HCT116 (cell line): ENCODE measurements at regions of chr18 and their contacts with region 1.

Region 1: GRCh38 chr18:37476182-37476581 is 89.4 kb downstream of the CELF4 start:
- DNase-seq: peak; percentile 31
- ATAC-seq: peak; percentile 93
- H3K4me3 ChIP-seq: no peak overlapping the region
- H3K27ac ChIP-seq: no peak overlapping the region
- H3K4me1 ChIP-seq: peaks cover 0 to 2% of the 10 kb centered on the region in 2 experiments; a peak in 2 of 4 replicates
- H3K27me3 ChIP-seq: peaks cover 26% of the 10 kb centered on the region; the same call in 1 of the 2 replicates
- CTCF ChIP-seq: peak; percentile 74 to 79 (median 75)
- POLR2A ChIP-seq: no peak
- RAD21 ChIP-seq: peak; percentile 63

Region 2: GRCh38 chr18:36942264-36942663 is 533.9 kb before region 1 on chr18:
- CTCF ChIA-PET with region 1: interaction called, 3 read pairs
- POLR2A ChIA-PET with region 1: no interaction called
- RAD21 ChIA-PET with region 1: no interaction called
- intact Hi-C with region 1: loop called (anchors 1 kb)
- DNase-seq: peak; percentile 18
- ATAC-seq: peak; percentile 76
- H3K4me3 ChIP-seq: no peak overlapping the region
- H3K27ac ChIP-seq: no peak overlapping the region
- H3K4me1 ChIP-seq: peaks cover 0 to 4% of the 10 kb centered on the region in 2 experiments; a peak in 1 of 4 replicates
- H3K27me3 ChIP-seq: no peaks in the 10 kb centered on the region
- CTCF ChIP-seq: peak; percentile 45 to 90 (median 74); a peak in 5 of 6 replicates
- POLR2A ChIP-seq: no peak
- RAD21 ChIP-seq: peak; percentile 73

Region 3: GRCh38 chr18:37322492-37323035 is 153.6 kb before region 1 on chr18:
- CTCF ChIA-PET with region 1: no interaction called
- POLR2A ChIA-PET with region 1: no interaction called
- RAD21 ChIA-PET with region 1: no interaction called
- intact Hi-C with region 1: loop called (anchors 10 kb)
- DNase-seq: peak; percentile 26
- ATAC-seq: peak; percentile 92
- H3K4me3 ChIP-seq: no peak overlapping the region
- H3K27ac ChIP-seq: no peak overlapping the region
- H3K4me1 ChIP-seq: no peaks in the 10 kb centered on the region
- H3K27me3 ChIP-seq: no peaks in the 10 kb centered on the region
- CTCF ChIP-seq: peak; percentile 49 to 91 (median 89); a peak in 5 of 6 replicates
- POLR2A ChIP-seq: no peak
- RAD21 ChIP-seq: peak; percentile 75

Region 4: DNA sequence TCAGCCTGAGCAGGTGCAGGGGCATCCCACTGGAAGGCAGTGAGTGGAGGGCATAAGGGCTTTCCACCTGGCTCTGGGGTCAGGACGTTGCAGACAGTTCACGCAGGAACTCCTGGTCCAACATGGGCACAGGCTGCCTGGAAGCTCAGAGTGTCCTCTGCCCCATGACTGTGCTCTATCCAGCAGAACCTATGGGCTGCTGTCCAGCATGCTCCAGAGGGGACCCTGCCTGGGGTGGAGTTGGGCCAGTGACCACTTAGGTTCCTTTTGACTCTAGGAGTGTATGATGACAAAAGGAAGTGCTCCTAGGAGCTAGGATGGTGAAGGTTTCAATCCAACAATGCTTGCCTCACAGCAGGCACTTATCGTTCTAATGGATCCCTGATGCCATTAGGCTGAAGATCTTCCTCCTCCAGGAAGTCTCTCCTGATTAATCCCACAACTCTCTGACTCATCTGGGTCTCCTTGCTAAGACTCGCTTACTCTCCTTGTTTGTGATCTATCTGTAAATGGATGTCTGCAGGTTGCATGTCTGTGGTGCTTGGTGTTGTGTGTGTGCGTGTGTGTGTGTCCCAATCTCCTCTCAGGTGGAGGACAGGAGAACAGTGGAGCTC is 134.6 kb before region 1 on chr18:
- CTCF ChIA-PET with region 1: no interaction called
- POLR2A ChIA-PET with region 1: no interaction called
- RAD21 ChIA-PET with region 1: no interaction called
- intact Hi-C with region 1: loop called (anchors 1 kb)
- DNase-seq: no peak
- ATAC-seq: no peak
- H3K4me3 ChIP-seq: no peak overlapping the region
- H3K27ac ChIP-seq: no peak overlapping the region
- H3K4me1 ChIP-seq: no peaks in the 10 kb centered on the region
- H3K27me3 ChIP-seq: peaks cover 21% of the 10 kb centered on the region; the same call in 1 of the 2 replicates
- CTCF ChIP-seq: no peak
- POLR2A ChIP-seq: no peak
- RAD21 ChIP-seq: no peak

Region 5: DNA sequence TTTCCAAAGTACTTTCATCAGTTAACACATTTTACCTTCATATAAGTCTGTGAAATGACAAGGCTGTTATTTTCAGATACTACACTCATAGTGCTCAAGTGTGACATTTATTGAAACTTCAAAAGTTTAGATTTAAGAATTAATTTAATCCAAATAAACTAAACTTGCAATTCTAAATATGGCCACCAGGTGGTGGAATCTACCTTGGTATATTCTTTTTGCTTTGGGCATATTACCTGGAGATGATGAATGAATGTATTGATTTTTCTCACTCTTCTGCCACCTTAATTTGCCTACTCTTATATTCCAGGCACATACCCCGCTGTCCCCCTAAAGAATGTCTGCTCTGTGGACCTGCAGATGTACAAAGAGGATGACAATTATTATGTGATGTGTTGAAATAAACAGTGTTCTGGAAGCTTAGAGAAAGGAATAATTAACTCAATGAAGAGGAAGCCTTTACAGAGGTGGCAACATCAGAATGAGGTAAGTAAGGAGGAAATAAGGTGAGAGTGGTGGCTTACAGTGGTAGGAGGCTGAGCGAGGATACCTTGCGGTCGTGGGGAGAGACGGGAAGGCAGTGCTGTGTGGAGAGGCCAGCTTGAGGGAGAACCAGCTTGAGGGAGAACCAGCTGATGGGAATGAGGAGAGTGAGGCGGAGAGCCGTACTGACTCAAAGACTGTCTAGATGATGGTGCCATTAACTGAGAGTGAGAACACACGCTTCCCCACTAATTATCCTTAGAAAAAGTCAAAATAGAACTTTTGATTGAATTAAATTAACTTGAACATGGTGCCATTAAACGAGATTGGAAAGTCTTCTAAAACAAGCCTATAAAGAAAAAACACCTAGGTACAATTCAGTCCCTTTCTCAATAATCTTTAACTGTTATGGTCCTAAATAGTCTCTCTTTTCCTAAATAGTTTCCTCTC is 90.1 kb before region 1 on chr18:
- CTCF ChIA-PET with region 1: interaction called, 3 read pairs
- POLR2A ChIA-PET with region 1: no interaction called
- RAD21 ChIA-PET with region 1: no interaction called
- intact Hi-C with region 1: loop called (anchors 1 kb)
- DNase-seq: peak; percentile 24
- ATAC-seq: no peak
- H3K4me3 ChIP-seq: no peak overlapping the region
- H3K27ac ChIP-seq: no peak overlapping the region
- H3K4me1 ChIP-seq: no peaks in the 10 kb centered on the region
- H3K27me3 ChIP-seq: peaks cover 6% of the 10 kb centered on the region; the same call in 1 of the 2 replicates
- CTCF ChIP-seq: peak; percentile 48 to 80 (median 77); a peak in 5 of 6 replicates
- POLR2A ChIP-seq: no peak
- RAD21 ChIP-seq: peak; percentile 81

Region 6: DNA sequence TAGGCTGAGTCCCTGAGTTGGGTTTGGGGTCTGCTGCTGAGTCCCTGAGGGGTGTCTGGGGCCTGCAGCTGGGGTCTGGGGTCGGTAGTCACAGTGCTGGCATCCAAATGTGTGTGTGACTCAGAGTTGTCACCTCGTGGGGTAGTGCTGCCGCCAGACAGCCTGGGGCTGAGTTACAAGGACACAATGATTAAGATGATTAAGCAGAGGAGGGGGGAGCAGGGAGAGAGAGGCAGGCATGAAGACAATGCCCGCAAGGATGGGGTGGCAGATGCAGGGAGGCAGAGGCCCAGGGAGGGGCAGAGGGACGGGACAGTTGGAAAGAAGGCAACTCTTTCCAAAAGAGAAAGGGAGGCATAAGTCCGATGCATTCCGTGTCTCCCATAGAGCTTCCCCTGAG is 30.8 kb before region 1 on chr18:
- CTCF ChIA-PET with region 1: no interaction called
- POLR2A ChIA-PET with region 1: no interaction called
- RAD21 ChIA-PET with region 1: no interaction called
- intact Hi-C with region 1: loop called (anchors 1 kb)
- DNase-seq: no peak
- ATAC-seq: no peak
- H3K4me3 ChIP-seq: no peak overlapping the region
- H3K27ac ChIP-seq: no peak overlapping the region
- H3K4me1 ChIP-seq: peaks cover 9 to 13% of the 10 kb centered on the region in 2 experiments; a peak in 3 of 4 replicates
- H3K27me3 ChIP-seq: peaks cover 30% of the 10 kb centered on the region; the same call in 1 of the 2 replicates
- CTCF ChIP-seq: no peak
- POLR2A ChIP-seq: no peak
- RAD21 ChIP-seq: no peak